ENCODE measurements at regions of chr2 and their contacts with region 1.

Region 1: GRCh38 chr2:176269319-176270099 is at the start of gene MTX2:
- DNase-seq: peak; percentile 60
- H3K4me3 Mint-ChIP-seq: peak within 1 kb of the TSS; percentile 98
- H3K27ac Mint-ChIP-seq: peak within 1 kb of the TSS; percentile 93
- H3K4me1 Mint-ChIP-seq: peaks cover 24% of the 10 kb centered on the region
- H3K27me3 Mint-ChIP-seq: peaks cover 12% of the 10 kb centered on the region
- total RNA-seq, gene MTX2: 24.9 and 30.7 TPM in 2 replicates

Region 2: DNA sequence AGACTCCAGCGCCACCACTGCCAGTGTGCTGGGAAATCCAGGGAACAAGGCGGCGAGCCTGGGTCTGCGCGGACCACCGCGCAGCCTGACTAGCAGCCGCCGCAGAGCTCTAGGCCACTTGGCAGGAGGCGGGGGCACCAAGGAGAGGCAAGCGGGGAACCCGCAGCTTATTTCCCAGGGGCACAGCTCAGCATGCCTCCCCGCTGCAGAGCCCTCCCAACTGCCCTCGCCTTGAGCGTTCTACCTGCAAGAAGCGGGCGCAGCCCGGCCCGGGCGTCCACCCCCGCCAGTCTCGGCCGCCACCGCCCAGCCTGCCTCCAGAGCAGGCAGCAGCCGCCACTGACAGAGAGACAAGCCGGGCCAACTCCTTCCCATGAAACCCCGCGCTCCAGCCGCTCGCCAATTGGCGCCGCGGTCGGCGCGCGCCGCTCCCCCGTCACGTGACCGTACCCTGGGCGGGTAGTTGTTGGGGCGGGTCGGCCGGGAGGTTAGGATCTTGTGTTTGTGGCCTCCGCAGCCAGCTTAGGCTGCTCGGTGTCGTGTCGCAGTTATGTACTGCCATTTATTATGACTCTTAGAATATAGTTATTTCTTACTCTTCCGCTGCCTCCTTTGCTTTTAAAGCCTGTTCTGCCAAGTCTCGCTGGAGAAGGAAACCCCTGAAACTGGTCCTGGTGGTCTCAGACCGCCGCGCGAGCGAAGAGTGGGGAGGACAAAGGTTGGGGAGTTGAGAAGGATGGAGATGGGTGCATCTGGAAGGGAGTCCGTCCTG is 267.4 kb before region 1 on chr2 and contains the start of gene LNPK:
- intact Hi-C with region 1: loop called (anchors 1 kb)
- DNase-seq: peak; percentile 91
- H3K4me3 Mint-ChIP-seq: peak within 1 kb of the TSS; percentile 95
- H3K27ac Mint-ChIP-seq: peak within 1 kb of the TSS; percentile 91
- H3K4me1 Mint-ChIP-seq: peaks cover 25% of the 10 kb centered on the region
- H3K27me3 Mint-ChIP-seq: peaks cover 5% of the 10 kb centered on the region
- total RNA-seq, gene LNPK: 35.2 and 43.6 TPM in 2 replicates

Region 3: GRCh38 chr2:176380341-176380740 is 110.8 kb after region 1 on chr2:
- intact Hi-C with region 1: no loop called
- DNase-seq: no peak
- H3K4me3 Mint-ChIP-seq: no peak overlapping the region
- H3K27ac Mint-ChIP-seq: no peak overlapping the region
- H3K4me1 Mint-ChIP-seq: no peaks in the 10 kb centered on the region
- H3K27me3 Mint-ChIP-seq: peaks cover 6% of the 10 kb centered on the region